Spleen (tissue), 13 donors: ENCODE measurements at regions of chr3 and their contacts with region 1.

Region 1: DNA sequence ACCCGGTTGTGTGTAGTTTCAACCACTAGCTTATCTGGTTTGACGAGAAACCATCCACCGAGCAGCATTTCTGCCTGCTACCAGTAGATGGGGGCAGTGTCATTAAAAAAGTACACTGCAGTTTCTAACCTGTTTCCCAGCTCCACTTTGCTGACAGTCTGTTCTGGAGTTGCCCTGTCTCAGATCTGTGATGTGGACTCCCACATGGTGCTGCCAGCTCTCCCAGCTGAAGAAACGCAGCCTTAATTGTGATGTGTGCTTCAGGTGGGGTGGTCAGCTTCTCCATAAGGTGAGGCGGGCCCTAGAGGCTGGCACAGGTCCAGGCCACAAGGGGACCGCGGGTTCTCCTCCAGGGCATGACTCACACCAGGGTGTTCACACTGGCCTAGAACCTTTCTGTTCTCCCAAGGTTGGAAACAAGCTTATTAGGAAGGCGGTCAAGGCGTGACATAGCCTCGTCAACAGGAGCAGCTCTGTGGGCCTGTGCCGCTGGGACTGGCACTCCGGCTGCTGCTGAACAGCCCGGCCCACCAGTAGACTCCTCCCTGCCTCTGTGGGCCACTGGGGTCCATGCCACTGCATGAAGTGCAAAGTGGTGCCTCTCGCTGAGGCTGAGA is 2.9 kb upstream of the FAM43A start:
- DNase-seq: peak; percentile 84
- H3K4me3 ChIP-seq: no peak overlapping the region
- H3K27ac ChIP-seq: peak overlapping the region in 5 of 8 donors; percentile 37 to 69 (median 53)
- H3K4me1 ChIP-seq: peaks cover 17 to 56% (median 43%) of the 10 kb centered on the region in 6 donors
- H3K27me3 ChIP-seq: peaks cover 0 to 11% (median 0%) of the 10 kb centered on the region in 7 donors
- CTCF ChIP-seq: peak; percentile 81 to 97 (median 90)
- POLR2A ChIP-seq: no peak

Region 2: DNA sequence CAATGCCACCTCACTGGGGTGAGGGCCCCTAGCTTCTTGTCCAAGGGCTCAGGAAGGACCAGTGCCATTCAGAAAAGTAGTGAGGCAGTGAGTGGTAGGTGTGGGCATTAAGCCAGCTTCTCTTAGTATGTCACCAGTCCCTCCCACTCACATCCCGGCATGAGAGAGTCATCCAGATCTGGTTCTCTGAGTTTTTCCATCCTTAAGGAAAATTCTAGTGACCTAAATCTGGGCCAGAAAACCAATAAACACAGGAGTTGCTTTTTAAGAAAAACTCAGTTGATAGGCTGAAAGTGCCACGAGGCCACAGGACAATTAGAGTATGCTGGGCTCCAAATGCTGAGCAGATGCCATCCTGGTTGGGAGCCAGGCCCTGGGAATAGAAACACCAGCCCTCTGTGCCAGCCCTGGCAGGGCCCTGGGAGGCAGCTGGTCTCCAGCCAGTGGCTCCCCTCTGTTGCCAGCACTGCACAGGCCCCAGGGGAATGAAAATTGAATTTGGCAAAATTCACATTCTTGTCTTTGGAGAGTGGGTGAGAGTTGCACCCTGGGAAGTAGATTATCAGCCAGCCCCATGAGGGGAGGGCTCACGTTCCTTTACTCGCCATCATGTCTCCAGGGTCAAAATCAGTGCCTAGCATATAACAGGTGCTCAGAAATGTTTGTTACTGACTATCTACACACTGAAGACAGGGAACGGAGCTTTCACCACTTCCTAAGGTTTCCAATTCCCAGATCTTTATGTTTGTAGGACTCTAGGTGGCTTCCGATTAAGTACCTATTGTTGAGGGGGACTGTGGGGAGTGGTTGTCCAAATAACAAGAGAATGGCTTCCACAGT is 55.7 kb after region 1 on chr3:
- intact Hi-C with region 1: no loop called
- DNase-seq: no peak
- H3K4me3 ChIP-seq: no peak overlapping the region
- H3K27ac ChIP-seq: peak overlapping the region in 3 of 8 donors; percentile 82 to 84 (median 84)
- H3K4me1 ChIP-seq: peaks cover 0 to 38% (median 9%) of the 10 kb centered on the region in 6 donors
- H3K27me3 ChIP-seq: peaks cover 0 to 7% (median 0%) of the 10 kb centered on the region in 7 donors
- CTCF ChIP-seq: no peak
- POLR2A ChIP-seq: no peak

Region 3: GRCh38 chr3:194952841-194953241 is 270.0 kb after region 1 on chr3:
- intact Hi-C with region 1: loop called (anchors 10 kb)
- DNase-seq: no peak
- H3K4me3 ChIP-seq: no peak overlapping the region
- H3K27ac ChIP-seq: peak overlapping the region in 5 of 8 donors; percentile 23 to 68 (median 48)
- H3K4me1 ChIP-seq: peaks cover 0 to 25% (median 7%) of the 10 kb centered on the region in 6 donors
- H3K27me3 ChIP-seq: no peaks in the 10 kb centered on the region
- CTCF ChIP-seq: no peak
- POLR2A ChIP-seq: no peak

Region 4: GRCh38 chr3:195106418-195106906 is 423.7 kb after region 1 on chr3:
- intact Hi-C with region 1: loop called (anchors 5 kb)
- DNase-seq: peak; percentile 94
- H3K4me3 ChIP-seq: peak overlapping the region in 1 of 8 donors; percentile 53
- H3K27ac ChIP-seq: peak overlapping the region in 4 of 8 donors; percentile 28 to 41 (median 34)
- H3K4me1 ChIP-seq: peaks cover 6 to 60% (median 28%) of the 10 kb centered on the region in 6 donors
- H3K27me3 ChIP-seq: no peaks in the 10 kb centered on the region
- CTCF ChIP-seq: peak; percentile 97 to 100 (median 99)
- POLR2A ChIP-seq: no peak

Region 5: DNA sequence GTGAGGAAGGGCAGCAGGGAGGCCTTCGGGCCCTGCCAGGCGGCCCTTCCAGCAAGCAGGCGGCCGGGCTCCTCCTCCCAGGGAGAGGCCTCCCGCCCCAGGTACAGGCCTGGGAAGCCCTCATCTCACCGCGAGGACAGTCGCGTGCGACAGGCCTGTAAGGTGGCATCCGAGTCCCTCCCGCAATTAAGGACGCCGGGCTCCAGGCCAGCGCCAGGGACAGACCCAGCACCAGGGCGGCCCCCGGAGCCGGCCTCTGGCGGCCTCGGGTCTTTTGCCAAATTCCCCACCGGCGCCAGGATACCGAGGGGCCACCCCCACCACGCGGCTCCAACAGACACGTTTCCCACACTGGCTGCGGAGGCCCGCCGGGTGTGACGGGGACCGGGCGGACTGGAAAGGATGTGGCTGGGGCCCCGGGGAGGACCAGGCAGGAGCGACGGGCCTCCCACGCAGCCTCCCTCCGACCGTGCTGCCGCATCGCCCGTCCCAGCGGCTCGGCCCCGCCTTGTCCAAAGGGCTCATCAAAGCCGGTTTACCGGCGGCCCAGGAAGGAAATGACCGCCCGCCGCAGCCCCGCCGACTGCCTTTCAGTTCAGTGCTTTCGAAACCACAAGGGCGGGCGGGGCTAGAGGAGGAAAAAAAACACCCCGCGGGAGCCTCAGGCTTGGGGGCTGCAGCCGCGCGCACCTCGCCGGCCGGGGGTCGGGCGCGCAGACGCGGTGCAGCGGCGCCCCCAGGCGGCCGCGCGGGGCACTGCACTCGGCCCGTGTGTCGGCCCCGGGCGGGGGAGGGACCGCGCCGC is 576.9 kb after region 1 on chr3:
- intact Hi-C with region 1: loop called (anchors 5 kb)
- DNase-seq: peak; percentile 97
- H3K4me3 ChIP-seq: peak overlapping the region; percentile 54 to 88 (median 60)
- H3K27ac ChIP-seq: peak overlapping the region; percentile 83 to 96 (median 93)
- H3K4me1 ChIP-seq: peaks cover 11 to 62% (median 33%) of the 10 kb centered on the region in 6 donors
- H3K27me3 ChIP-seq: no peaks in the 10 kb centered on the region
- CTCF ChIP-seq: peak in 7 of 11 experiments; percentile 56 to 97 (median 85)
- POLR2A ChIP-seq: peak in 1 of 3 donors; percentile 18